ENCODE measurements at regions of chr17 and their contacts with region 1.

Region 1: GRCh38 chr17:7851438-7852256 is 3.2 kb upstream of the TMEM88 start:
- DNase-seq: peak; percentile 90 to 95 (median 93)
- H3K4me3 ChIP-seq: no peak overlapping the region
- H3K27ac ChIP-seq: no peak overlapping the region
- H3K4me1 ChIP-seq: peaks cover 5% of the 10 kb centered on the region
- H3K27me3 ChIP-seq: no peaks in the 10 kb centered on the region
- CTCF ChIP-seq: peak; percentile 97 to 99 (median 98)
- EP300 ChIP-seq: no peak
- POLR2A ChIP-seq: no peak

Region 2: DNA sequence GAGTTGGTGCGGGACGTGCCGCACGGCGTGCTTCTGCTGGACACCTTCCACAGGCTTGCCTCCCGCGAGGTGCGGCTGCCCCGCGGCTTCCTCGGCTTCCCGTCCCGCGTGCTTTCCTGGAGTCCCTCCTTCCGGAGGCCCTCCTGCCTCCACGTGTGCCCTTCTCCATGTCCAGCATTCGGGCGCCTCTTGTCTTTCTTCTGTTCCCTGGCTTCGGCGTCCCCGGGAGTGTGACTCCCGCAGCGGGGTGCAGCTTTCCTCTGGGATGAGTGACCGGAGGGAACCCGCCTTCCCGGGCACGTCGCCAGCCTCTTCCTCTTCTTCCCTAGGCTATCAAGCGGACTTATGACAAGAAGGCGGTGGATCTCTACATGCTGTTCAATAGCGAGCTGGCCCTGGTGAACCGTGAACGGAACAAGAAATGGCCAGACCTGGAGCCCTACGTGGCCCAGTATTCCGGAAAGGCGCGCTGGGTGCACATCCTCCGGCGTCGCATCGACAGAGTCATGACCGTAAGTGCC is 111.1 kb before region 1 on chr17:
- intact Hi-C with region 1: loop called in 2 of 4 experiments (anchors 5 to 10 kb)
- DNase-seq: peak in 2 of 5 donors; percentile 49 to 54
- H3K4me3 ChIP-seq: no peak overlapping the region
- H3K27ac ChIP-seq: no peak overlapping the region
- H3K4me1 ChIP-seq: no peaks in the 10 kb centered on the region
- H3K27me3 ChIP-seq: no peaks in the 10 kb centered on the region
- CTCF ChIP-seq: no peak
- EP300 ChIP-seq: no peak
- POLR2A ChIP-seq: no peak

Region 3: DNA sequence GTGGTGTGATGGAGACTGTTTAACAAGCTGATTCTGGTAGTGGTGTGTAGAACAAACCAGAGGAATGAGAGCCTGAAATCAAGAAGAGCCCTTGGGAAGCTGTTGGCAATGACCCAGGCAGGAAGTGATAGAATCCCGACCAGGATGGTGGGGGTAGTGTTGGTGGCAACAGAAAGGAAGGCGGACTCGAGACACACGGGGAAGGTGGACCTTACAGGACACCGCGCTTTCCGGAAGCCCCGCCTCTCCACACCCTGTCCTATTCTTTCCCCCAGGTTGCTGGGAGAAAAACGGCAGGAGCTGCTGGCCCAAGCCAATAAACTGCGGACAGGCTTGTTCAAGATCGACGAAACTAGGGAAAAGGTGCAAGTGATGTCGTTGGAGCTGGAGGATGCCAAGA is 47.7 kb before region 1 on chr17:
- intact Hi-C with region 1: no loop called
- DNase-seq: no peak
- H3K4me3 ChIP-seq: no peak overlapping the region
- H3K27ac ChIP-seq: no peak overlapping the region
- H3K4me1 ChIP-seq: no peaks in the 10 kb centered on the region
- H3K27me3 ChIP-seq: no peaks in the 10 kb centered on the region
- CTCF ChIP-seq: no peak
- EP300 ChIP-seq: no peak
- POLR2A ChIP-seq: no peak

Region 4: DNA sequence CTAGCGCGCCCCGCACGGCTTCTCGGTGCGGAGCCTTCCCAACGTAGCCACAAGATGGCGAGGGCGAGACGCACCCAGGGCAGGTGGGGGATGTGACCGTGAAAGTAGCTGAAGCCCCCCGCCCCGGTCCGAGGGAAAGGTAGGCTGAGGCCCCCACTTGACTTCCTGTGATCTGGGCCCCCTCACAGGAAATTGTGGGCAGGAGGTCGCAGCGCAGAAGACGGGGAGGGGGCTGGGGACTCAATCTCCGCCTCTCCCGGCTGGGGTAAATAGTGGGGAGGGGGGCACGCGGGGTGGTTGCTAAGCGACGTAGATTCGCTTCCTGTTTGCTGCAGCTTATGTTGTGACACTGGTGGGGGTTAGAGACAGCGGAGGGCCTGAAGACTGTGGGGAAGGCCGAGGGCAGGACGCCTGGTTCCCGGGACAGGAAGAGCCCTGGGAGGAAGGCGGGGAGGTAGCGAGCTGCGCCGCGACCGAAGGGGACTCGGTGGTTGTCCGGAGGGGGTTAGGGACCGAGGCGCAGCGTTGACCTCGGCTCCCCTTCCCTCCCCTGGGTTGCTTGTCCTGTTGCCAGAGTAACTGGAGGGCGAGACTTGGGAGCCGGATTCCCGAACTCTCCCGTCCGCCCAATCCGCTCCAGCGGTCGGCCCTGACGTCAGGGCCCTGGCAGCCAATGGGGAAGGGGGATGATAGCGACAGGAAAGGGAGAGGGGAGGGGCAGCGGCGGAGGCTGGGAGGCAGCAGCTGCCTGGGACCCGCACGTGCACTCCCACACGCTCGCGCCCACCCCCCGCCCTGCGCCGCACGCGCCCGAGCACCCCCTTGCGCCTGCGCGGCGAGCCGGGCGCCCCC is 16.5 kb before region 1 on chr17:
- intact Hi-C with region 1: loop called in 1 of 4 experiments (anchors 2 kb)
- DNase-seq: peak; percentile 98 to 99 (median 99)
- H3K4me3 ChIP-seq: peak overlapping the region; percentile 95
- H3K27ac ChIP-seq: peak overlapping the region; percentile 97 to 99
- H3K4me1 ChIP-seq: peaks cover 16% of the 10 kb centered on the region
- H3K27me3 ChIP-seq: no peaks in the 10 kb centered on the region
- CTCF ChIP-seq: peak; percentile 77 to 94 (median 91)
- EP300 ChIP-seq: peak; percentile 63
- POLR2A ChIP-seq: peak; percentile 95

Region 5: DNA sequence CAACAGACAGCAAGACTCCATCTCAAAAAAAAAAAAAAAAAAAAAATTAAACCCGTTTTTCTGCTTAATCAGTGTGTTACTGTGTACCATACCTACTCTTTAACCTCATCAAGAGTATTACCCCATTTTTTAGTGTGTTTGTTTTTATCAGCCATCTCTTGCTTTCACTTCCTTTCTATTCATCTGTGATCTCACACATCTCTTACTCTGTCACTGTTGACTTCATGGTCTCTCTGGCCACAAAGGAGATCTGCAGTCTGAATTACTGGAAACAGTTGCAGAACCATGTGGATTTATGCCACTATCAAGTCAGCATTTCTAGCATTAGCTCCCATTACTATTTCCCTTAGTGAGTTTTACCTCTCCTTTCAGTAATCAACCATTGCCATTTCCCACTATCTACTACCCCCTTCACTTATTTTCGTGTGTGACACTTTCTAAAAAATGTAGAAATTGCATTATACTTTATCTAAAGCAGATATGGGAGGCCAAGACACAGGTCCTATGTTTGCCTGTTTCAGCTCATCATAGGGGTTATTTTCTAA is 604.1 kb after region 1 on chr17:
- intact Hi-C with region 1: no loop called
- DNase-seq: no peak
- H3K4me3 ChIP-seq: no peak overlapping the region
- H3K27ac ChIP-seq: no peak overlapping the region
- H3K4me1 ChIP-seq: no peaks in the 10 kb centered on the region
- H3K27me3 ChIP-seq: no peaks in the 10 kb centered on the region
- CTCF ChIP-seq: no peak
- EP300 ChIP-seq: no peak
- POLR2A ChIP-seq: no peak